Mammary epithelial cell (primary cell): ENCODE measurements at regions of chr1 and their contacts with region 1.

Region 1: DNA sequence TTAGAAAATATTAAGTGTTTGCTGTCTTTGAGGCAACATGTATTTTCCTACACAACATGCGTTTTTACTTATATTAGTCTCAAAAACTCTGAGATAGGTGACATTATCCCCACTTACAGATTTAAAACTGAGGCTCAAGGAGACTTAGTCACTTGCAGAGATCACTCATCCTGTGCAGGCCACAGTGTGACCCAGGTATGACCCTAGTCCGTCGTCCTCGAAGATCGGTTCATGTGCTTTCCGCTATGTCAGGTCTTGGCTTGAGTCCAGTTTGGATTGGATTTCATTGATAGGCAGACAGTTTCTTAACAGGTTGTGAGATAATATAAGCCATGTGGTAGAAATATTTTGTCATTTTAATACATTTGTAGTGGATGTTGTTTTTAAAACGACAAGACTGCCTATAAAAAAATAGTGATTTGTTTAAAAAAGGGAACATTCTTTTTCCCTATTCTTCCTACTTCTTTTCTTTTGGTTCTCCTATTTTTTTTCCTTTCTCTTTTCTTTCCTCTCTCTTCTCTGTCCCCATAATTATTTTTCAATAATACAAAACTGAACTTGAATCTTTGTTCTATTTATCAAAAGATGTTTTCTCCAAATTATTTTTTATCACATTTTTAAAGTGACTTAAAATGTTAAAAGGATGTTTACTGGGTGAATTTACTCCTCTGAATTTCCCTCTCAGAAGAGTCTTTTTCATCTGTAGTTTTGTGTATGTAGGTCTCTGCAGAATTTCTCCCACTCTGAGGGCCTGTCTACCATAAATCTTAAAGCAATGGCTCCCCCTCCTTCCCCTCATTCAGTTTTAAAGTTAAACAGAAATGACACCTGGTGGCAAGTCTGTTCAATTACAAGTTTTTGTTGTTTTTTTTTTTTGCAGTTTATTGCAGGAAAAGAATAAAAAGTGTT is 81.8 kb downstream of the PHTF1 start:
- DNase-seq: peak; percentile 11
- H3K4me3 ChIP-seq: no peak overlapping the region
- H3K27ac ChIP-seq: no peak overlapping the region
- H3K4me1 ChIP-seq: no peaks in the 10 kb centered on the region
- H3K27me3 ChIP-seq: no peaks in the 10 kb centered on the region
- CTCF ChIP-seq: peak; percentile 31 to 55

Region 2: GRCh38 chr1:113072757-113073478 is 604.6 kb before region 1 on chr1 and contains the start of gene LRIG2:
- CTCF ChIA-PET with region 1: no interaction called
- dilution Hi-C with region 1: no loop called
- in situ Hi-C with region 1: no loop called
- intact Hi-C with region 1: loop called (anchors 5 kb)
- DNase-seq: peak; percentile 99
- H3K4me3 ChIP-seq: peak within 1 kb of the TSS; percentile 65 to 92 (median 86)
- H3K27ac ChIP-seq: peak within 1 kb of the TSS; percentile 75
- H3K4me1 ChIP-seq: peaks cover 11% of the 10 kb centered on the region
- H3K27me3 ChIP-seq: no peaks in the 10 kb centered on the region
- CTCF ChIP-seq: peak; percentile 57 to 66
- total RNA-seq, gene LRIG2: 11.6 to 17.3 TPM

Region 3: DNA sequence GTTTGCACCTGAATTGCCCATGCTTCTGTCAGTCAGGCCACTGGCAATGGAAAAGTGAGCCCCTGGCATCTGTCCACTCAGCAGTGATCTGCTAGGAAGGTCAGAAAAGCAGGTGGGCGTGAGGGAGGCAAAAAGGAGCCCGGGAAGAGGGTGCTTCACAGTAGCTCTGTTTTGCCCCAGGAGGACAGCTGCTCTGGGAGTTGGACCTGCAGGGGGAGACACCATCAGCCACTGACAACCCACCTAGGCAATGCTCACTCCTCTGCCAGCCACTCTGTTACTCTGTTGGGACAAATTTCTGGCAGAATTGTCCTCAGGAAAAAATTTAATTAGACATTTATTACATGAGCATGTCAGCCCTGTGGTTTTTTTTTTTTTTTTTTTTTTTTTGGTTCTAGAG is 458.1 kb before region 1 on chr1:
- CTCF ChIA-PET with region 1: no interaction called
- dilution Hi-C with region 1: no loop called
- in situ Hi-C with region 1: no loop called
- intact Hi-C with region 1: loop called (anchors 1 kb)
- DNase-seq: no peak
- H3K4me3 ChIP-seq: no peak overlapping the region
- H3K27ac ChIP-seq: no peak overlapping the region
- H3K4me1 ChIP-seq: no peaks in the 10 kb centered on the region
- H3K27me3 ChIP-seq: peaks cover 1% of the 10 kb centered on the region
- CTCF ChIP-seq: peak; percentile 16 to 52

Region 4: DNA sequence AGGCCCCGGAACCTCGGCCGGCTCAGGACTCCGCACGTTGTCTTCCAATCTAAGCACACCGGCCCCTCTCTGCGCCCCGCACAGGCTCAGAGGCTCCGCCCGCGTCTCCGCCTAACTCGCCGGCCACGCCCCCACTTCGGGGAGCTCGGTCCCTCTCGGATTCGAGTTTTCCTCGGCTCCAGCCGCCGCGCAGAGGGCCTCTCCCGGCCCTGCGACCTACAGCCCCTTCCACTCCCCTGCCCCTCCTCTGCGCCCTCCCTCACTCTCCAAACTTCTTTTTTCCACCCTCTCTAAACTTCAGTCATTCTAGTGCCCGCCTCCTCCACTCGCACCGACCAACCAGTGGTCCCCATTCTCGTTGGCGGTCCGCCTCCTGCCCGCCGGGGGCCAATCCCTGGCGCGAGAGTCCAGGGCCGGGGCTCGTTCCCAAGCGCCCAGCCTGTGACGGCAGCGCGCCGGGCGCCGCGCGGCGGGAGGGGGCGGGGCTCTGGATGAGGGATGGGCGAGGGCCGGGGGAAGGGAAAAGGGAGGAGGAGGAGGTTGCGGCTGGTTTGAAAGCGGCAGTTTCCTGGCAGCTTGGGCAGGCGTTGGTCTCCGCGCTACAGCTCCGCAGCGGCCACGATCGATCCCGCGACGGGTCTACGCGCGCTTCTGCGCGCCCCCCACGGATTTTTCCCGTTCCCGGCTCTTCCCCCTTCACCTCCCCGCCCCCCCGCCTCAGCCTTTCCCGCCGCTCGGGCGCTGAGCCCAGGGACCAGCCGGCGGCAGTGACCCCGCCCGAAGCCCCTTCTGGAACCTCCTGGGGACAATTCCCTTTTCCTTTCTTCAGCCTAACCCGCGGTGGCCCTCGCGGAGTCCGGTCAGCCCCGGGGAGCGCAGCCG is 287.3 kb before region 1 on chr1 and contains the start of gene MAGI3:
- CTCF ChIA-PET with region 1: interaction called, 7 read pairs
- dilution Hi-C with region 1: no loop called
- in situ Hi-C with region 1: no loop called
- intact Hi-C with region 1: loop called (anchors 2 kb)
- DNase-seq: peak; percentile 99
- H3K4me3 ChIP-seq: peak within 1 kb of the TSS; percentile 68 to 97 (median 74)
- H3K27ac ChIP-seq: peak within 1 kb of the TSS; percentile 71
- H3K4me1 ChIP-seq: peaks cover 14% of the 10 kb centered on the region
- H3K27me3 ChIP-seq: no peaks in the 10 kb centered on the region
- CTCF ChIP-seq: no peak
- total RNA-seq, gene MAGI3: 8.5 to 10.3 TPM

Region 5: DNA sequence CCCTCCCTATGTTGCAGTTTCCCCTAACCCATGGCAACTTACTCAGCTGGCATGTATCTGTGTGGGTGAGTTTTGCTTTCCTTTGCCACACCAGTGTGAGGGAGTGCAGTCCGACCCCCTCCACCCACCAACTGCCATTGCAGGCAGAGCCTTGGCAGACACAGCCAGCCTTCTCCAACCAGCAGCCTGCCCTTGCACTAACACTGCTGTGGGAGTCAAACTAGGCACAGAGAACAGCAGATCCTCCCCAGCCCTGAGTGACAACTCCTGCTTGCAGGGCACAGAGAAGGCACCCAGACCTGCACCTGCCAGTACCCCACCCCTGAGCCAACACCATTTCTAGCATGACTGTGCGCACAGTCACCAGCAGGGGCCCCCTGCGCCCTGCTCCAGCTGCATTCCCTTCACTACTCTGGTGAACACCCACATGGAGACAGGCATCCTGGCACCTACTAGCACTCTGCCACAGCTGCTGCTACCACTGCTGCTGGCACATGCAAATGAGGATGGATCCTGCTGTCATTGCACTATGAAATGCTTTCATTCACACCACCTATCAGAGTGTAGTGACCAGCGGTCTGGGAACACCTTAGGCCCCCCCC is 188.8 kb before region 1 on chr1:
- CTCF ChIA-PET with region 1: no interaction called
- dilution Hi-C with region 1: no loop called
- in situ Hi-C with region 1: loop called in 1 of 2 experiments (anchors 25 kb)
- intact Hi-C with region 1: loop called (anchors 1 kb)
- DNase-seq: peak; percentile 20
- H3K4me3 ChIP-seq: no peak overlapping the region
- H3K27ac ChIP-seq: no peak overlapping the region
- H3K4me1 ChIP-seq: no peaks in the 10 kb centered on the region
- H3K27me3 ChIP-seq: no peaks in the 10 kb centered on the region
- CTCF ChIP-seq: peak in 1 of 2 donors; percentile 55